Cardiac septum (tissue), 1 donor: ENCODE measurements at regions of chr17 and their contacts with region 1.

Region 1: GRCh38 chr17:3913531-3914311 is 2.5 kb downstream of the P2RX1 start:
- DNase-seq: peak; percentile 95

Region 2: GRCh38 chr17:3626831-3627768 is 286.6 kb before region 1 on chr17:
- intact Hi-C with region 1: no loop called
- DNase-seq: no peak

Region 3: DNA sequence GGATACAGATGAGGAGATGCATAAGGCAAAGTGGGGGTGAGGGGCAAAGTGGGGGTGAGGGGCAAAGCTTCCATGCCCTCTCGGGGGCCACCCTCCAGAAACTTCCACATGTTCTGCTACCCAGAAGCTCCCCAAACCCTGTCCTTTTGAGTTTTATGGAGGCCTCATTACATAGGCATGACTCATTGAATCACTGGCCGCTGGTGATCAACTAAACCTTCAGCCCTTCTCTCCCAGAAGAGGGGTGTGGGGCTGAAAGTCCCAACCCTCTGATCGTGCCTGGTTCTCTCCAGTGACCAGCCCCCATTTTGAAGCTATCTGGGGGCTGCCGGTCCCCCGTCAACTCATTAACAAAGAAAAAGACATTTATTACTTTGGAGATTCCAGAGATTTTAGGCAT is 140.2 kb before region 1 on chr17:
- intact Hi-C with region 1: no loop called
- DNase-seq: no peak

Region 4: DNA sequence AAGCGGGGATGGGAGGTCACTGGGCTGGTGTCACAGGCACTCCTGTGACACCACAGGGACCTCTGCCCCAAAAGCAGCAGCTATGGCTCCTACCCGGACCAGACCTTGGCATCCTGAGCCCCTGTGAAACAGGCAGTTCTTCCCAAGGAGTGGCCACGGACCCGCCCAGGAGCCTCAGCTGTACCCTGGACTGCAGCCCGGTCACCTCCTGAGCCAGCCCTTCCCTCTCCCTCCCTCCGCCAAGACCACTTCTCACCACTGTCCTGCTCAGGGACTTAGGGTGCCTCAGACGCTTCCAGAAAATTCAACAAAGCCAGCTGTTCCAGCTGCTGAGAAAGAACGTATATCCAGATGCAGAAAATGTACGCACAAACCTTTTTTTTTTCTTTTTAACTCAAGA is 53.8 kb before region 1 on chr17:
- intact Hi-C with region 1: loop called (anchors 5 kb)
- DNase-seq: no peak

Region 5: GRCh38 chr17:3927628-3928340 is 14.1 kb after region 1 on chr17:
- intact Hi-C with region 1: loop called (anchors 1 kb)
- DNase-seq: no peak

Region 6: GRCh38 chr17:3965118-3965803 is 51.5 kb after region 1 on chr17:
- intact Hi-C with region 1: no loop called
- DNase-seq: peak; percentile 91

Region 7: DNA sequence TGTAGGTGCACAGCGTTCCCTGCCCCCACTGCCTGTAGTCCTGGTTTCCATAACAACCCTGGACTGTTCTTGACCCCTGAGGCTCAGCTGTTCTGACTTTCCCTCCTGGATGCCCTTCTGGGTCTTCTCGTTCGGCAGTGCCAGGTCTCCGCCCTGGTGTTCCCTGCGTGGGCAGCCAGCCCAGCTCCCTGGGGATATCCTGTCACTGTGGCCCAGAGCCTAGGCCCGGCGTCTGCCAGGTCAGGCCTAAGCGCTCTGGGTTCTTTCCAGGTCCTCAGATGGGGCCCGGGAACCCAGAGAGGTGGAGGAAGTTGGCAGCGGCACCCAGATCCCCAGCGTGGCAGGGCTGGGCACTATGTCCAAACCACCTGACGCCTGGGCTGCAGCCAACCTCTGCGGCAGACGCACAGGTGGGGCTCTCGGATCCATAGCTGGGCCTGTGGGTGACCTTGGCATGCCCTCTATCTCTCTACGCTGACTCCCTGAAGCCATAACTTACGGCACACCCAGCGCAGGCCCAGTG is 63.0 kb after region 1 on chr17:
- intact Hi-C with region 1: loop called (anchors 5 kb)
- DNase-seq: peak; percentile 89

Region 8: GRCh38 chr17:4004517-4005295 is 91.0 kb after region 1 on chr17:
- intact Hi-C with region 1: loop called (anchors 2 kb)
- DNase-seq: peak; percentile 84

Region 9: GRCh38 chr17:4073983-4074830 is 160.5 kb after region 1 on chr17:
- intact Hi-C with region 1: loop called (anchors 2 kb)
- DNase-seq: no peak